Body of pancreas (tissue), 4 donors: ENCODE measurements at regions of chr4 and their contacts with region 1.

Region 1: DNA sequence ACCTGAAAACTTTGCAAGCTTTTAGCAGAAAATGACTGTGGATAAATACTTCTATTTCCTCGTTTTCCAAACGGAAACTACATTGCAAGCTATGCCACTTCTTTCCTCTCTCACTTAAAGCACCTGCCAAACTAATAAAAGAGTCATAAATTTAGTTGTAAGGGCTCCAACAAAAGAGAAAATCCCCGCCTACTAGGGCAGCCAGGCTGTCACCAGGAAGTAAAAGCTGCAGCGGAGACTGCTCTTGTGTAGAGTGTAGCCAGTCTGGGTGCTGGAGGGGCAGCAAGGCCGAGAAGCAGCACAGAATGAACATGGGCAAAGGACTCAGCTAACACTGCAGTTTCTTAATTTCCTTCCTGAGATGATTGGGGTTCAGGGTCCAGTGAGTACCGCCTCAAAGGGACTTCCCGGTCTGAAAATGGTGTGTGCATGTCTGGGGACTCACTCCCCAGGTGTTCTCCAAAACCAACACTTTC is 89.3 kb upstream of the MAML3 start:
- DNase-seq: peak in 3 of 4 donors; percentile 61 to 71 (median 65)
- ATAC-seq: peak; percentile 80
- H3K4me3 ChIP-seq: no peak overlapping the region
- H3K27ac ChIP-seq: peak overlapping the region; percentile 23 to 82 (median 64)
- H3K4me1 ChIP-seq: peaks cover 12% of the 10 kb centered on the region
- H3K27me3 ChIP-seq: no peaks in the 10 kb centered on the region
- CTCF ChIP-seq: no peak
- POLR2A ChIP-seq: peak in 2 of 3 donors; percentile 66 to 71

Region 2: GRCh38 chr4:140163029-140163810 is 80.1 kb before region 1 on chr4:
- intact Hi-C with region 1: loop called (anchors 10 kb)
- DNase-seq: no peak
- ATAC-seq: no peak
- H3K4me3 ChIP-seq: no peak overlapping the region
- H3K27ac ChIP-seq: no peak overlapping the region
- H3K4me1 ChIP-seq: peaks cover 7% of the 10 kb centered on the region
- H3K27me3 ChIP-seq: no peaks in the 10 kb centered on the region
- CTCF ChIP-seq: no peak
- POLR2A ChIP-seq: no peak